Esophagus muscularis mucosa (tissue), 4 donors: ENCODE measurements at regions of chr3 and their contacts with region 1.

Region 1: DNA sequence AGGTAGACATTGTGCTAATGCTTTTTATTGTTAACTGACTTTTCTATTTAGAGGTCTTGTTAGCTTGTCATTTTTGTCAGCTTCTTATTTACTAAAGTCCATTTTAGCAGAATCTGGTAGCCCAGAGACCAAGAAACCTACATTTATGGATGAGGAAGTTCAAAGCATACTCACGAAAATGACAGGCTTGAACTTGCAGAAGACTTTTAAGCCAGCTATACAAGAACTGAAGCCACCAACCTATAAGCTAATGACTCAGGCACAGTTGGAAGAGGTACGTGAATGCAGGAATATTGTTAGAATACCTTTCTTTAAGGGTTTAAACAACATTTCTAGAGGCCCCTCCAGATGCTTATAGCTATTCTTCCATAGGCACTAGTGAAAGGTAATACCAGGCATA is 3.0 kb downstream of the MRPS22 start:
- DNase-seq: no peak
- H3K4me3 ChIP-seq: no peak overlapping the region
- H3K27ac ChIP-seq: no peak overlapping the region
- H3K4me1 ChIP-seq: peaks cover 15 to 29% (median 25%) of the 10 kb centered on the region in 4 donors
- H3K27me3 ChIP-seq: no peaks in the 10 kb centered on the region
- CTCF ChIP-seq: no peak
- EP300 ChIP-seq: no peak
- POLR2A ChIP-seq: no peak

Region 2: GRCh38 chr3:139225548-139225947 is 121.2 kb before region 1 on chr3:
- intact Hi-C with region 1: no loop called
- DNase-seq: no peak
- H3K4me3 ChIP-seq: no peak overlapping the region
- H3K27ac ChIP-seq: no peak overlapping the region
- H3K4me1 ChIP-seq: peaks cover 8 to 11% (median 10%) of the 10 kb centered on the region in 4 donors
- H3K27me3 ChIP-seq: no peaks in the 10 kb centered on the region
- CTCF ChIP-seq: no peak
- EP300 ChIP-seq: no peak
- POLR2A ChIP-seq: no peak

Region 3: GRCh38 chr3:139389458-139390209 is 42.9 kb after region 1 on chr3 and contains the start of gene COPB2:
- intact Hi-C with region 1: loop called (anchors 5 kb)
- DNase-seq: peak; percentile 100
- H3K4me3 ChIP-seq: peak within 1 kb of the TSS; percentile 79 to 96 (median 80)
- H3K27ac ChIP-seq: peak within 1 kb of the TSS; percentile 88 to 97 (median 96)
- H3K4me1 ChIP-seq: peaks cover 39 to 72% (median 46%) of the 10 kb centered on the region in 4 donors
- H3K27me3 ChIP-seq: no peaks in the 10 kb centered on the region
- CTCF ChIP-seq: no peak
- EP300 ChIP-seq: no peak
- POLR2A ChIP-seq: peak; percentile 53
- total RNA-seq, gene COPB2: 73.6 to 78.7 (median 76.3) TPM